ENCODE measurements at regions of chr12 and their contacts with region 1.

Region 1: GRCh38 chr12:47032644-47033043 is 46.8 kb upstream of the PCED1B start:
- ATAC-seq: peak; percentile 42 to 85 (median 60)
- H3K4me3 ChIP-seq: no peak overlapping the region
- H3K27ac ChIP-seq: no peak overlapping the region
- H3K4me1 ChIP-seq: peaks cover 0 to 8% of the 10 kb centered on the region in 2 donors

Region 2: GRCh38 chr12:47307680-47308399 is 275.2 kb after region 1 on chr12:
- in situ Hi-C with region 1: loop called in 1 of 9 experiments (anchors 25 kb)
- ATAC-seq: peak in 5 of 8 experiments; percentile 36 to 97 (median 73)
- H3K4me3 ChIP-seq: no peak overlapping the region
- H3K27ac ChIP-seq: no peak overlapping the region
- H3K4me1 ChIP-seq: no peaks in the 10 kb centered on the region

Region 3: GRCh38 chr12:47397664-47398281 is 365.1 kb after region 1 on chr12:
- in situ Hi-C with region 1: loop called in 1 of 9 experiments (anchors 25 kb)
- ATAC-seq: peak in 4 of 8 experiments; percentile 21 to 97 (median 94)
- H3K4me3 ChIP-seq: no peak overlapping the region
- H3K27ac ChIP-seq: no peak overlapping the region
- H3K4me1 ChIP-seq: no peaks in the 10 kb centered on the region

Region 4: GRCh38 chr12:47651368-47652254 is 619.0 kb after region 1 on chr12:
- in situ Hi-C with region 1: loop called in 3 of 9 experiments (anchors 25 kb)
- ATAC-seq: peak in 6 of 8 experiments; percentile 67 to 88 (median 76)
- H3K4me3 ChIP-seq: no peak overlapping the region
- H3K27ac ChIP-seq: no peak overlapping the region
- H3K4me1 ChIP-seq: no peaks in the 10 kb centered on the region

Region 5: DNA sequence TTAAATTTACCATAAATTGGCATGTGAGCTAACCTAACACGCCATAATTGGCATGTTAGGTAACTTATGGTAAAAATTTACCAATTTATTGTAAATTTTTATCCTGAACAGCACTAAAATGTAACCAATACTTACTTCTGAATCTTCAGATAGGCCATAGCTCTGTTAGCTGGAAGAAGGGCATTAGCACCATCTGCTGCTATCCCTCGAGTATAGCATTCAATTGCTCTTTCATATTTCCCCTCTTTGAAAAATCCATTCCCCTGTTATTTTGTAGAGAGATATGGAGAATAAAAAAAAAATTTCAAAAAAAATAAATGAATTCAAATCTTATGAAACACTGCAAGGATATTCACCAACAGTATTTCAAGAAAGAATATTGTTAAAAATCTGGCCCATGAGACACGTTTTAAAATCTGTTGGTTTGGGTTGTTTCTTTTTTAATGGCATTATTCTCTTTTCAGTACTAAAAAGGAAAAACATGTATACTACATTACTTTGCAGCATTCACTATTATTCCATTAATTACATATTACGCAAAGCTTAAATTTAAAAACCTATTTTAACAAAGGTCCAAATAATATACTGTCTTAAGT is 654.1 kb after region 1 on chr12:
- in situ Hi-C with region 1: loop called in 2 of 9 experiments (anchors 25 kb)
- ATAC-seq: peak in 6 of 8 experiments; percentile 39 to 67 (median 52)
- H3K4me3 ChIP-seq: no peak overlapping the region
- H3K27ac ChIP-seq: no peak overlapping the region
- H3K4me1 ChIP-seq: no peaks in the 10 kb centered on the region

Region 6: DNA sequence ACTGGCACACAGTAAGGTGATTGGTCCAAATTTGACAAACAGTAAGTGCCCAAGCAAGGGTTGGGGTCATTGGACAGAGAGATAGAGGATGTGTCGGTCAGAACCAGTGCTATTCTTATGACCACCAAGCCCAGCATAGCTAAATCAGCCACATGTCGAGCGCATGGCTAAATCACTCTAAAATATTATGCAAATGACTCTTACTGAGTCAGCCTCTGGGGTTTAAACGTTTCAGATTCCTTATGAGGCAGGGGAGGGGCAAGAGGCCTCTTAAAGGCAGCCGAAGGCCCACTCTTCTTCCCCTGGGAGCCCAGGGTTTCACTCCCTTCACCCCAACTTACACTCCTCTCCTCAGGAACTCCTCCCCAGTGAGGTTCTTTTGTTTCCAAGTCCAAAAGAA is 693.2 kb after region 1 on chr12:
- in situ Hi-C with region 1: no loop called
- ATAC-seq: peak in 7 of 8 experiments; percentile 30 to 97 (median 79)
- H3K4me3 ChIP-seq: no peak overlapping the region
- H3K27ac ChIP-seq: no peak overlapping the region
- H3K4me1 ChIP-seq: no peaks in the 10 kb centered on the region